WTC11 (cell line): ENCODE measurements at regions of chr6 and their contacts with region 1.

Region 1: DNA sequence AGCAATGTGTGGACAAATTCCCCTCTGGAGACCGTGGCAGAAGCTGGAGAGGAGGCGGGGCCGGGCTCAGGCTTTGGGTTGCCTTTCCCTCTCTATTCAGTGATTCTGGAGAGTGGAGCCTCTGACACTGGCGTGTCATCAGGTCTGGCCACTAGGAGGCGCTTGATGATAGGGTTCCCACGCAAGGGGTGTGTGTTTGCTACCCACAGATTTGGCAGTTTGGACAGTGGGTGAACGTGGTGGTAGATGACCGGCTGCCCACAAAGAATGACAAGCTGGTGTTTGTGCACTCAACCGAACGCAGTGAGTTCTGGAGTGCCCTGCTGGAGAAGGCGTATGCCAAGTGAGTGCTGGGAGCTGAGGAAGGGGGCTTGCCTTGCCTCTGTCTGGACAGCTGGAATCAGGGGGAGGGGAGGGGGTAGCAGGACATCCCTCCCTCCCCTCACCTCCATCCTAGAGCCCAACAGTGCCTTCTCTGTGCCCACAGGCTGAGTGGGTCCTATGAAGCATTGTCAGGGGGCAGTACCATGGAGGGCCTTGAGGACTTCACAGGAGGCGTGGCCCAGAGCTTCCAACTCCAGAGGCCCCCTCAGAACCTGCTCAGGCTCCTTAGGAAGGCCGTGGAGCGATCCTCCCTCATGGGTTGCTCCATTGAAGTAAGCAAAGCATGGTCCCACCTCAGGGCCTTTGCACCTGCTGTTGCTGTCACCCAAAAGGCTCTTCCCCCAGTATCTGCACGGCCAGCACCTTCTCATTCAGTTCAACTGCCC is 14.3 kb downstream of the CAPN11 start:
- DNase-seq: peak; percentile 88
- ATAC-seq: peak; percentile 90
- H3K4me3 Mint-ChIP-seq: no peak overlapping the region
- H3K27ac Mint-ChIP-seq: no peak overlapping the region
- H3K4me1 Mint-ChIP-seq: peaks cover 10% of the 10 kb centered on the region
- H3K27me3 Mint-ChIP-seq: peaks cover 5% of the 10 kb centered on the region; the same call in 1 of the 2 replicates
- CTCF ChIP-seq: peak; percentile 88

Region 2: GRCh38 chr6:44156494-44157151 is 16.3 kb before region 1 on chr6:
- CTCF ChIA-PET with region 1: interaction called, 22 read pairs
- POLR2A ChIA-PET with region 1: no interaction called
- DNase-seq: peak; percentile 36
- ATAC-seq: peak; percentile 48
- H3K4me3 Mint-ChIP-seq: no peak overlapping the region
- H3K27ac Mint-ChIP-seq: peak overlapping the region; percentile 77
- H3K4me1 Mint-ChIP-seq: peaks cover 26% of the 10 kb centered on the region
- H3K27me3 Mint-ChIP-seq: no peaks in the 10 kb centered on the region
- CTCF ChIP-seq: no peak

Region 3: GRCh38 chr6:44185953-44186634 is 13.2 kb after region 1 on chr6:
- CTCF ChIA-PET with region 1: interaction called, 28 read pairs
- POLR2A ChIA-PET with region 1: interaction called, 3 read pairs
- DNase-seq: no peak
- ATAC-seq: peak; percentile 63
- H3K4me3 Mint-ChIP-seq: no peak overlapping the region
- H3K27ac Mint-ChIP-seq: peak overlapping the region; percentile 22
- H3K4me1 Mint-ChIP-seq: peaks cover 33% of the 10 kb centered on the region
- H3K27me3 Mint-ChIP-seq: peaks cover 8% of the 10 kb centered on the region
- CTCF ChIP-seq: no peak

Region 4: DNA sequence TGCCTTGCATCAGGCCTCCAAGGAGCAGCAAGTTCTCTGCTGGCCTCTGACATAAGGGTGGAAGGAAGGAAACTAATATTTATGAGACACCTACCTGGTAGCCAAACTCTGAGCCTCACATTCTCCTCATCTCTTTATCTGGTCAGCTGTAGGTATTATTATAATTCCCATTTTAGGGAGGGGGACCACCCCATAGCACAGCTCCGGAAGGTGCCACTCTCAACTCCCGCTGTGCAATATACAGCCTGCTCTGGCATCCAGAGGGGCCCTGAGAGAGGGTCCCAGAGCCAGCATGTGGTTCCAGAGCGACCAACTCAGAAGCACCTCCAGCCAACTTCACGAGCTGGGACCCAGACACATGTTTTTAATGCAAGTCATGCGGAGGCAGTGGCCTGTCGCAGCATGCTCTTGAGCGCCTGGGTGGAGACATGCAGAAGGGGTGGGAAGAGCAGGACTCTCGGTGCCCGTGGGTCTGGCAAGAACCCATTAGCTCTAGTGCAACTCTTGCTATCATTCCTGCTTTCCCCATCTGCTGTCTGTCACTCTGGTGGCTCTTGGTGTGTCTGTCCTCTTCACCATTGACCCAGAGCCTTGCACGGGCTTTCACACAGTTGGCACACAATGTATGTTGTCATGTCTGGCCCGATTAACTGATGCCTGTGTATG is 28.9 kb after region 1 on chr6:
- CTCF ChIA-PET with region 1: interaction called, 20 read pairs
- POLR2A ChIA-PET with region 1: no interaction called
- DNase-seq: no peak
- ATAC-seq: no peak
- H3K4me3 Mint-ChIP-seq: no peak overlapping the region
- H3K27ac Mint-ChIP-seq: peak overlapping the region; percentile 100
- H3K4me1 Mint-ChIP-seq: peaks cover 53% of the 10 kb centered on the region
- H3K27me3 Mint-ChIP-seq: no peaks in the 10 kb centered on the region; the same call in 1 of the 2 replicates
- CTCF ChIP-seq: no peak

Region 5: DNA sequence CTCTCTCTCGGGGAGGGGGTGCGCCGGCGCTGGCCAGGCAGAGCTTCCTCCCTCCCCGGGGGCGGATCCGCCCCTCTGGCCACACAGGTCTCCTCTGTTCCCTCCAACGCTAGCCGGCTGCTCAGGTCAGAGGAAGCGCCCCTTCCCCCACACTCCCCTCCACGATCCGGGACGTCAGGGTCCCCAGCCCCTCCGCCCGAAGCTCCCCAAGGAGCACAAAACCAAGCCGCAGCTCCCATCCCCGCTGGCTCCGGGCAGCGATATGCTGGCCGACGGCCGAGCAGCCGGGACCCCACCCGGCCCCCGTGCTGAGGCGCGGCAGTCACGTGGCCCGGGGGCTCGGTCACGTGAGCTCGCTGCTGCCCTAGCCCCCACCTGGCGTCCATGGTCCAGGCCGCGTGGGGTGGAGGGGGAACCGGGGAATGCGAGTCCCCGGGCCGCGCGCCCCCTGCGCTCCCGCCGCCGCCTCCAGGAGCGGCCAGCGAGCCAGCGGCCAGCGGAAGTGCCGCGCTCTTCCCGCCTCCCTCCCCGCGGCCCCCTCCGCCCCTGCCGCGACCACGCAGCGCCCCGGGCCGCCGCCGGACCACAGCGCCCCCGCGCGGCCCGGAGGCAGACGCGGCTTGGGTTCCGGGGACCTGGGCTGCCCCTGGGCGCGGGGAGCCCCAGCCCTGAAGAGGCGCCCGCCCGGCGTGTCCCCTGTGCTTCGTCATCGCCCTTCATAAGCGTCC is 84.3 kb after region 1 on chr6 and contains the start of gene SLC35B2:
- CTCF ChIA-PET with region 1: interaction called, 13 read pairs
- POLR2A ChIA-PET with region 1: interaction called, 3 read pairs
- DNase-seq: peak; percentile 76
- ATAC-seq: peak; percentile 31
- H3K4me3 Mint-ChIP-seq: peak within 1 kb of the TSS; percentile 83
- H3K27ac Mint-ChIP-seq: peak within 1 kb of the TSS; percentile 87
- H3K4me1 Mint-ChIP-seq: peaks cover 27% of the 10 kb centered on the region
- H3K27me3 Mint-ChIP-seq: no peaks in the 10 kb centered on the region
- CTCF ChIP-seq: peak; percentile 75
- total RNA-seq, gene SLC35B2: 28.9 to 36.7 TPM (median 30.8 TPM) in 3 replicates